Activated CD4-positive, alpha-beta memory T cell treated with anti-CD3 and anti-CD28 coated beads, Interleukin-2, amount 10 ng/mL, durations not matched to agents 7 days and 5 days (primary cell): ENCODE measurements at regions of chr15 and their contacts with region 1.

Region 1: DNA sequence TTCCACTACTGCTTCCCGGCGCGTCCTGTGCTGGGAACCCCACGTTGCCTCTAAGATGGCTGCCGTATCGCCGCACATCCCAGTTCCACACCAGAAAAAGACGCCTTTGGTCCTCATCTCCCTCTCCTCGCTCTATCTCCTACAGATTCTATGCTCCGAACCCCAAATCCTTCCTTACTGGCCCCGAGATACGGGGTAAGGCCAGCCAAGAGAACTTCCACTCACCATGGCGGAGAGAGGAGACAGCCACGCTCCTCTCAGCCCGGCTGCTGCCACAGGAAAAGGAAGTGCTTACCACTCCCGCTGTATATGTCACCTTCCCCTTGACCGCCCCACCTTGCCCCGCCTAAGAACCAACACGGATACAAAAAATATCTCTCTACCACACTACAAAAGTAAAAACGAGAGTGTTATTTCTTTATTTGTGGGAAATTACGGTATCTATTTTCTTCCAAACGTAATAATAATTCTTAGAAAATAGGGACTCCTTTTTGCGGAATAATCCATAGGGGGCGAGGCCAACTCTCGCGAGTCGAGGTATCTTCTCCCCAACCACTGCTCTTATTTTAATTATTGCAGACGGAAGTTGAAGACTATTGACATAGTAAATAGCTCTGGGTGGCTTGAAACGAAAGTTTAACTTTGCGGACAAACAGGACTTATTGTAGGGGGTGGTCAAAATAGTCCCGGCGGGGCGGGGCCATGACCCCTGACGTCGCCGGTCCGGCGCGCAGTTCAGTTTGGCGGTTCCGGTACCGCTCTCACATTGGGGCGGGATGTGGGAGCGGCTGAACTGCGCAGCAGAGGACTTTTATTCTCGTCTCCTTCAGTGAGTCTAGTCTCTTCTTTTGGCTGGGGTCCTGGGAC is at the starts of genes RPL4 and ZWILCH:
- DNase-seq: peak; percentile 84
- H3K4me3 Mint-ChIP-seq: peak within 1 kb of the TSS; percentile 92
- H3K27ac Mint-ChIP-seq: peak within 1 kb of the TSS; percentile 96
- H3K4me1 Mint-ChIP-seq: peaks cover 66% of the 10 kb centered on the region
- H3K27me3 Mint-ChIP-seq: no peaks in the 10 kb centered on the region
- total RNA-seq, gene RPL4: 2,309 to 2,338 TPM
- total RNA-seq, gene ZWILCH: 28.9 to 30.0 TPM

Region 2: GRCh38 chr15:66293419-66294156 is 211.2 kb before region 1 on chr15 and contains the start of gene DIS3L:
- CTCF ChIA-PET with region 1: interaction called, 11 read pairs
- POLR2A ChIA-PET with region 1: interaction called, 51 read pairs
- DNase-seq: peak; percentile 68
- H3K4me3 Mint-ChIP-seq: peak within 1 kb of the TSS; percentile 83
- H3K27ac Mint-ChIP-seq: peak within 1 kb of the TSS; percentile 91
- H3K4me1 Mint-ChIP-seq: peaks cover 52% of the 10 kb centered on the region
- H3K27me3 Mint-ChIP-seq: no peaks in the 10 kb centered on the region
- total RNA-seq, gene DIS3L: 24.0 to 24.9 TPM

Region 3: DNA sequence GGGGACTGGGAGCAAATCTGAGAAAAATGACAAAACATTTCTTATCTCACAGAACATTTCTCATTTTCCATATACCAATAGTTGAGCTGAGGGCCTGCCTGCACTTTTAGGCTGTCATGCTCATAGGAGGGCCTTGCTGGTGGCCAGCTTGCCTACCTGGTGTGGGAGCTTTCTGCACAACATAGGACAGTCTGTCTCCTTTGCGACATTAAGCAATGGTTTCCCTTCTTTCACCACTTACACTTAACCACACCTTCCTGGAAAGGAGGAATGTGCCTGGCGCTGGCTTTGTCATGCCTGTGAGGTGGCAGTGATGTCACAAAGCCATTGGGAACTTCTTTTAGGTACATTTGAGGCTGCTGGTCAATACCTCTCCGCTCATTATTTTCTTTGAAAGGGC is 12.9 kb before region 1 on chr15:
- CTCF ChIA-PET with region 1: interaction called, 4 read pairs
- POLR2A ChIA-PET with region 1: interaction called, 16 read pairs
- DNase-seq: no peak
- H3K4me3 Mint-ChIP-seq: no peak overlapping the region
- H3K27ac Mint-ChIP-seq: no peak overlapping the region
- H3K4me1 Mint-ChIP-seq: peaks cover 21% of the 10 kb centered on the region
- H3K27me3 Mint-ChIP-seq: no peaks in the 10 kb centered on the region

Region 4: GRCh38 chr15:66558300-66558699 is 53.5 kb after region 1 on chr15:
- CTCF ChIA-PET with region 1: no interaction called
- POLR2A ChIA-PET with region 1: no interaction called
- DNase-seq: no peak
- H3K4me3 Mint-ChIP-seq: no peak overlapping the region
- H3K27ac Mint-ChIP-seq: no peak overlapping the region
- H3K4me1 Mint-ChIP-seq: no peaks in the 10 kb centered on the region
- H3K27me3 Mint-ChIP-seq: no peaks in the 10 kb centered on the region